Activated CD4-positive, alpha-beta memory T cell treated with anti-CD3 and anti-CD28 coated beads for 36 hours (primary cell): ENCODE measurements at regions of chr15 and their contacts with region 1.

Region 1: GRCh38 chr15:81286621-81287121 is 37.3 kb downstream of the STARD5 start:
- DNase-seq: no peak
- H3K4me3 Mint-ChIP-seq: peak overlapping the region; percentile 58
- H3K27ac Mint-ChIP-seq: peak overlapping the region; percentile 88
- H3K4me1 Mint-ChIP-seq: peaks cover 68% of the 10 kb centered on the region
- H3K27me3 Mint-ChIP-seq: no peaks in the 10 kb centered on the region

Region 2: DNA sequence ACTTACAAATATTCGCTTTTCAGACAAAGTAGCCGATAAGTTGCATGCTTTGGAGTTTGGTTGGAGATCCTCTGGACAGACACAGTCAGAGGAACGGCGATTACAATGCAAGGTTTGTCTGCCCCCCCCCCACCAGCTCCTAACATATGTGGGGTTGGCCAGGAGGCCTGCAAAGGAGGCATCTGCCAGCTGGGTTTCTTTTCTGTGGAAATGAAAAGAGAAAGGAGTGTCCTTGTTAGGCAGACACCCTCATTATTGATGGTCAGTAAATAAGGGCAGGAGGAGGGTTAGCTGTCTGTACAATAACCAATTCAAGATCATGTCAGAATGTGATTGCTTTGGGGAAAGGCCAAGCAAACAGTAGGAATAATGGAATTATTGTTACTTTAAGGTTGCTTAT is 236.8 kb before region 1 on chr15:
- CTCF ChIA-PET with region 1: no interaction called
- POLR2A ChIA-PET with region 1: no interaction called
- intact Hi-C with region 1: no loop called
- DNase-seq: no peak
- H3K4me3 Mint-ChIP-seq: no peak overlapping the region
- H3K27ac Mint-ChIP-seq: no peak overlapping the region
- H3K4me1 Mint-ChIP-seq: peaks cover 4% of the 10 kb centered on the region
- H3K27me3 Mint-ChIP-seq: no peaks in the 10 kb centered on the region

Region 3: GRCh38 chr15:81323944-81324881 is 37.5 kb after region 1 on chr15 and contains the start of gene STARD5:
- CTCF ChIA-PET with region 1: interaction called, 3 read pairs
- POLR2A ChIA-PET with region 1: interaction called, 4 read pairs
- intact Hi-C with region 1: loop called (anchors 2 kb)
- DNase-seq: peak; percentile 98
- H3K4me3 Mint-ChIP-seq: peak within 1 kb of the TSS; percentile 100
- H3K27ac Mint-ChIP-seq: peak within 1 kb of the TSS; percentile 76
- H3K4me1 Mint-ChIP-seq: peaks cover 24% of the 10 kb centered on the region
- H3K27me3 Mint-ChIP-seq: no peaks in the 10 kb centered on the region
- total RNA-seq, gene STARD5: 7.3 to 9.1 TPM